B cell (primary cell): ENCODE measurements at regions of chr17 and their contacts with region 1.

Region 1: DNA sequence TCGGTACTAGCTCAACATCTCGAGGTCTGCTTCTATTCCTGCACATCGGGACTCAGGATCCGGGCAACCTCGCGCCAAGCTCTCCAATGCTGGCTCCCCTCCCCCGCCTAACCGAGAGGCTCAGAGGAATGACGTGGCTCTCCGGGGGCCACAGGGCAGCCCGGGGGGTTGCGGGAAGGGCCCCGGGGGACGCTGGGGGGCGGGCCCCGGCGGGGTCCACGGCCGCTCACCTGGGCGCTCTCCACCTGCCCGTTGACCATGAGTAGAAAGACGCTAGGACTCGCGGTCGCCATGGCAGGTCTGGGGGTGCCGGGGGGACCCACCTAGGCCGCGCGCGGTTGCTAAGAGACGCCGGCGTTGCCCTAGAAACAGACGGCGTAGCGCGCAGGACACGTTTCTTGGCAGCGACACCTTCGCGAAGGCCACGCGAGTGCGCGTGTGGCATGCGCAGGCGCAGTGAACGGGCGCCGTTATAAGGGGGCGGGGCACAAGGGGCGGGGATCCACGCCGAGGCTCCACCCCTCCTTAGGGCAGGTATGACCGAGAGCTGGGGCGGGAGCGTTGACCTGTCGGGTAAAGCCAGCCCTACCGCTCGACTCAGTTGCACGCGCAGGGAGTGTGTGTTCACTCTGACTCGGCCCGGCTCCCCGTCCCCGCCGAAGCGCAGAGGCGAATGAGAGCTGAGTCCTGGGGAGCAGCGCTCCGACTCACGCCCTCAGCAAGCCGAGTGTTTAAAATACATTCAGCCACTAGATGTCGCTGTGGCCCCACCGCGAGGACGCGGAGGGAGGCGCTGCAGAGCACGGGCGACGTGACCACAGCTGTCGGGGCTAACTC is at the start of gene B9D1:
- DNase-seq: peak; percentile 98
- ATAC-seq: peak; percentile 93
- H3K4me3 ChIP-seq: peak within 1 kb of the TSS; percentile 35 to 84 (median 69)
- H3K4me3 Mint-ChIP-seq: peak within 1 kb of the TSS; percentile 98
- H3K27ac ChIP-seq: peak within 1 kb of the TSS; percentile 20 to 82
- H3K27ac Mint-ChIP-seq: peak within 1 kb of the TSS; percentile 93
- H3K4me1 ChIP-seq: peaks cover 7 to 17% of the 10 kb centered on the region in 2 donors
- H3K4me1 Mint-ChIP-seq: peaks cover 19% of the 10 kb centered on the region
- H3K27me3 ChIP-seq: peaks cover 0 to 8% (median 0%) of the 10 kb centered on the region in 4 experiments
- H3K27me3 Mint-ChIP-seq: peaks cover 13% of the 10 kb centered on the region
- CTCF ChIP-seq: peak; percentile 98
- total RNA-seq, gene B9D1: 6.9 and 7.4 TPM in 2 replicates

Region 2: DNA sequence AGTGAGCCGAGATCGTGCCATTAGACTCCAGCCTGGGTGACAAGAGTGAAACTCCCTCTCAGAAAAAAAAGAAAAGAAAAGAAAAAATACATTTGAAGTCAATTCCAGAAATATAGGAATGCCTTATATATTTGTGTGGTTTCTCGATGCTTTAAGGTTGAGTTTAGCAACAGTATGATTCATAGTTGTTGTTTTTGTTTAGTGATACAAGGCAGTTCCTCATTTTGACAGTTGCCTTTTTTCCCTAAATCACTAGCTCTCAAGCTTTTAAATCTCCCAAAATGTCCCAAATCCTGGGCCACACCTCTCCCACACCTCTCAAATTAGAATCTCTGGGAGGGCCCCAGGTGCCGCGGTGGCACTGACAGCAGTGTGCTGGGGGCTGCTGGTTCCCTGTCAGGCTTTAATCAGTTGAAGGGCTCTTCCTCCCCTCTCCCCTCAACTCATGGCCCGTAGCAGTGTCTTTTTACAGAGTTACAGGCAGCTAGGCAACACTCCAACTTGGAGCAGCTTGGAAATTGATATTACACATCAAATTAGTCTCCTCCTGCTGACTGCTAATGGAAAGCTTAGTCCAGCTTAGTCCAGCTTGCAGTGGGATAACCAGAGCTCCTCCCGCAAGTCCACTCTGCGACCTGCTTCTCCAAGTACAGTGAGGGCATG is 66.9 kb before region 1 on chr17:
- CTCF ChIA-PET with region 1: no interaction called
- POLR2A ChIA-PET with region 1: no interaction called
- intact Hi-C with region 1: no loop called
- DNase-seq: no peak
- ATAC-seq: no peak
- H3K4me3 ChIP-seq: no peak overlapping the region
- H3K4me3 Mint-ChIP-seq: no peak overlapping the region
- H3K27ac ChIP-seq: no peak overlapping the region
- H3K27ac Mint-ChIP-seq: no peak overlapping the region
- H3K4me1 ChIP-seq: no peaks in the 10 kb centered on the region
- H3K4me1 Mint-ChIP-seq: peaks cover 4% of the 10 kb centered on the region
- H3K27me3 ChIP-seq: peaks cover 0 to 9% (median 4%) of the 10 kb centered on the region in 4 experiments
- H3K27me3 Mint-ChIP-seq: peaks cover 4% of the 10 kb centered on the region
- CTCF ChIP-seq: no peak

Region 3: DNA sequence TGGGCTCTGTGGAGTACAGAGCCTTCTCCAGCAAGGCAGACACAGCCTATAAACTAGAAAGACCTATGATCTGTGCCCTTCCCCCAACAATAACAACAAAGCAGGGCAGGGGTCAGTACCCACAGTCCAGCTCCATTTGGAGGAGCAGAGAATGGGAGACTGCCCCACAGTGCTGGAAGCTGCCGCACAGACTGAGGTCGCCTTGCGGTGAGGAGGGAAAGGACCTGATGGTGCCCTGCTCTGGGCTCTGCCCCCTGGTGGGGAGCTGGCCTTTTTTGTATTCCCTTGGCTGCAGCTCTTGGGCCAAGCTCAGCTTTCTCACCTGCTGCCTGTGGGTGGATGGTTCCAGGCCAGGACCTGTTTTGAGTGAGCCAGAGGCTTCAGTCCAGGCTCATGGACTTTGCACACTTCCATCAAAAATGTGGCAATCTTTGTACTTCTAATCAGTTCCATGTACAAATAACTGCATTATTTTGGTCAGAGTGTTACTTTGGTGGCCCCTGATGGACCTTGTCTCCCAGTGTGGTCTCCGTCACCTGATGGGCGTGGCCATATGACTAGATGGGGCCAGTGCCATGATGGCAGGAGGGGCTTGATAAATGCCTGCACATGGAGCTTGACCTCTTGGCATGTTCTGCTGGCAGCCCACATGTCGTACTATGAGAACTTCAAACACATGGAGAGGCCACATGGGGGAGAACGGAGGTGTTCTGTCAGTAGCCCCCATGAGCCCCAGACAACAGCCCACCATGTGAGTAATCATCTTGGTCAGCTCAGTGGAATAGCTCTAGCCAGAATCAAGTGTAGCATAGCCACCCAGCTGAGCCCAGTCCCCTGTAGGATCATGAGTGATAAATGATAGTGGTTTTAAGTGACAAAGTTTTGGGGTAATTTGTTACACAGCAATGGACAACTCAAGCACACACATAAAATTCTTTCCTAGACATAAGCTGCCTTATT is 24.2 kb before region 1 on chr17:
- CTCF ChIA-PET with region 1: interaction called, 22 read pairs
- POLR2A ChIA-PET with region 1: no interaction called
- intact Hi-C with region 1: no loop called
- DNase-seq: peak; percentile 86
- ATAC-seq: peak; percentile 98
- H3K4me3 ChIP-seq: no peak overlapping the region
- H3K4me3 Mint-ChIP-seq: no peak overlapping the region
- H3K27ac ChIP-seq: no peak overlapping the region
- H3K27ac Mint-ChIP-seq: no peak overlapping the region
- H3K4me1 ChIP-seq: peaks cover 0 to 3% of the 10 kb centered on the region in 2 donors
- H3K4me1 Mint-ChIP-seq: no peaks in the 10 kb centered on the region
- H3K27me3 ChIP-seq: peaks cover 0 to 3% (median 0%) of the 10 kb centered on the region in 4 experiments
- H3K27me3 Mint-ChIP-seq: peaks cover 15% of the 10 kb centered on the region
- CTCF ChIP-seq: peak; percentile 88

Region 4: GRCh38 chr17:19398301-19399181 is 36.0 kb after region 1 on chr17:
- CTCF ChIA-PET with region 1: no interaction called
- POLR2A ChIA-PET with region 1: no interaction called
- intact Hi-C with region 1: no loop called
- DNase-seq: no peak
- ATAC-seq: no peak
- H3K4me3 ChIP-seq: no peak overlapping the region
- H3K4me3 Mint-ChIP-seq: no peak overlapping the region
- H3K27ac ChIP-seq: no peak overlapping the region
- H3K27ac Mint-ChIP-seq: no peak overlapping the region
- H3K4me1 ChIP-seq: no peaks in the 10 kb centered on the region
- H3K4me1 Mint-ChIP-seq: no peaks in the 10 kb centered on the region
- H3K27me3 ChIP-seq: peaks cover 0 to 14% (median 1%) of the 10 kb centered on the region in 4 experiments
- H3K27me3 Mint-ChIP-seq: peaks cover 25% of the 10 kb centered on the region
- CTCF ChIP-seq: no peak

Region 5: GRCh38 chr17:19433727-19434340 is 71.3 kb after region 1 on chr17:
- CTCF ChIA-PET with region 1: interaction called, 10 read pairs
- POLR2A ChIA-PET with region 1: no interaction called
- intact Hi-C with region 1: no loop called
- DNase-seq: peak; percentile 20
- ATAC-seq: no peak
- H3K4me3 ChIP-seq: no peak overlapping the region
- H3K4me3 Mint-ChIP-seq: no peak overlapping the region
- H3K27ac ChIP-seq: no peak overlapping the region
- H3K27ac Mint-ChIP-seq: no peak overlapping the region
- H3K4me1 ChIP-seq: no peaks in the 10 kb centered on the region
- H3K4me1 Mint-ChIP-seq: no peaks in the 10 kb centered on the region
- H3K27me3 ChIP-seq: peaks cover 0 to 2% (median 0%) of the 10 kb centered on the region in 4 experiments
- H3K27me3 Mint-ChIP-seq: peaks cover 3% of the 10 kb centered on the region
- CTCF ChIP-seq: peak; percentile 12

Region 6: GRCh38 chr17:19464031-19465026 is 101.8 kb after region 1 on chr17:
- CTCF ChIA-PET with region 1: interaction called, 19 read pairs
- POLR2A ChIA-PET with region 1: no interaction called
- intact Hi-C with region 1: loop called (anchors 1 kb)
- DNase-seq: no peak
- ATAC-seq: no peak
- H3K4me3 ChIP-seq: peak overlapping the region in 1 of 5 experiments; percentile 25
- H3K4me3 Mint-ChIP-seq: peak overlapping the region; percentile 74
- H3K27ac ChIP-seq: peak overlapping the region; percentile 78 to 86
- H3K27ac Mint-ChIP-seq: peak overlapping the region; percentile 91
- H3K4me1 ChIP-seq: peaks cover 47 to 54% of the 10 kb centered on the region in 2 donors
- H3K4me1 Mint-ChIP-seq: peaks cover 48% of the 10 kb centered on the region
- H3K27me3 ChIP-seq: no peaks in the 10 kb centered on the region
- H3K27me3 Mint-ChIP-seq: no peaks in the 10 kb centered on the region
- CTCF ChIP-seq: no peak

Region 7: GRCh38 chr17:19513897-19514488 is 151.5 kb after region 1 on chr17:
- CTCF ChIA-PET with region 1: interaction called, 11 read pairs
- POLR2A ChIA-PET with region 1: no interaction called
- intact Hi-C with region 1: loop called (anchors 1 kb)
- DNase-seq: peak; percentile 82
- ATAC-seq: peak; percentile 75
- H3K4me3 ChIP-seq: no peak overlapping the region
- H3K4me3 Mint-ChIP-seq: peak overlapping the region; percentile 35
- H3K27ac ChIP-seq: no peak overlapping the region
- H3K27ac Mint-ChIP-seq: no peak overlapping the region
- H3K4me1 ChIP-seq: peaks cover 0 to 5% of the 10 kb centered on the region in 2 donors
- H3K4me1 Mint-ChIP-seq: peaks cover 6% of the 10 kb centered on the region
- H3K27me3 ChIP-seq: no peaks in the 10 kb centered on the region
- H3K27me3 Mint-ChIP-seq: no peaks in the 10 kb centered on the region
- CTCF ChIP-seq: peak; percentile 94

Region 8: GRCh38 chr17:19648475-19649406 is 286.2 kb after region 1 on chr17 and contains the start of gene ALDH3A2:
- CTCF ChIA-PET with region 1: interaction called, 14 read pairs
- POLR2A ChIA-PET with region 1: no interaction called
- intact Hi-C with region 1: loop called (anchors 1 kb)
- DNase-seq: peak; percentile 92
- ATAC-seq: peak; percentile 94
- H3K4me3 ChIP-seq: peak within 1 kb of the TSS; percentile 35 to 95 (median 83)
- H3K4me3 Mint-ChIP-seq: peak within 1 kb of the TSS; percentile 98
- H3K27ac ChIP-seq: peak within 1 kb of the TSS; percentile 72 to 76
- H3K27ac Mint-ChIP-seq: peak within 1 kb of the TSS; percentile 97
- H3K4me1 ChIP-seq: peaks cover 16 to 19% of the 10 kb centered on the region in 2 donors
- H3K4me1 Mint-ChIP-seq: peaks cover 35% of the 10 kb centered on the region
- H3K27me3 ChIP-seq: no peaks in the 10 kb centered on the region
- H3K27me3 Mint-ChIP-seq: peaks cover 4% of the 10 kb centered on the region
- CTCF ChIP-seq: no peak
- total RNA-seq, gene ALDH3A2: 31.5 and 35.1 TPM in 2 replicates